AG04450 (cell line): ENCODE measurements at regions of chr20 and their contacts with region 1.

Region 1: DNA sequence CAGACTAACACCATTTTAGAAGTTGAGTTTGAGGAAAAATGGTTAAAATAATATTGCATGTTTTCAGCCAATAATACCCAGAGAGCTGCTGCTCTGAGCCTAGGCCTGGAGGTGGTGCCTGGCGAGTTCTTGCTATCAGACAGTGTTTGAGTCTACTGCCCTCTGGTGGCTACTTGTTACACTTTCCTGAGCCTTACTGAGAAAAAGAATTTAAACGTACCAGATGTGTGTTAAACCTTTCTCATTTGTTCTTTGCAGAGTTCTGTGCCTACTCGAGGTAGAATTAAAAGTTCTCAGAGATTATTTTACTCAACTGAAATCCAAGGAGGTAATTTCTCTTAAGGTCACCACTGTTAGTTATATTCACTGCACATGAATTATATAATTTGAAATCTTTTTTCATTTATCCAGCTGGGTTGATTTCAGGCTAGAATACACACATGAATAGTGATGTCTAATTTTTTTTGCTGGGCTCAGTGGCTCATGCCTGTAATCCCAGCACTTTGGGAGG is 38.2 kb downstream of the SHLD1 start:
- DNase-seq: peak; percentile 77
- H3K4me3 ChIP-seq: no peak overlapping the region
- H3K27ac ChIP-seq: no peak overlapping the region
- H3K27me3 ChIP-seq: no peaks in the 10 kb centered on the region
- CTCF ChIP-seq: peak; percentile 91

Region 2: DNA sequence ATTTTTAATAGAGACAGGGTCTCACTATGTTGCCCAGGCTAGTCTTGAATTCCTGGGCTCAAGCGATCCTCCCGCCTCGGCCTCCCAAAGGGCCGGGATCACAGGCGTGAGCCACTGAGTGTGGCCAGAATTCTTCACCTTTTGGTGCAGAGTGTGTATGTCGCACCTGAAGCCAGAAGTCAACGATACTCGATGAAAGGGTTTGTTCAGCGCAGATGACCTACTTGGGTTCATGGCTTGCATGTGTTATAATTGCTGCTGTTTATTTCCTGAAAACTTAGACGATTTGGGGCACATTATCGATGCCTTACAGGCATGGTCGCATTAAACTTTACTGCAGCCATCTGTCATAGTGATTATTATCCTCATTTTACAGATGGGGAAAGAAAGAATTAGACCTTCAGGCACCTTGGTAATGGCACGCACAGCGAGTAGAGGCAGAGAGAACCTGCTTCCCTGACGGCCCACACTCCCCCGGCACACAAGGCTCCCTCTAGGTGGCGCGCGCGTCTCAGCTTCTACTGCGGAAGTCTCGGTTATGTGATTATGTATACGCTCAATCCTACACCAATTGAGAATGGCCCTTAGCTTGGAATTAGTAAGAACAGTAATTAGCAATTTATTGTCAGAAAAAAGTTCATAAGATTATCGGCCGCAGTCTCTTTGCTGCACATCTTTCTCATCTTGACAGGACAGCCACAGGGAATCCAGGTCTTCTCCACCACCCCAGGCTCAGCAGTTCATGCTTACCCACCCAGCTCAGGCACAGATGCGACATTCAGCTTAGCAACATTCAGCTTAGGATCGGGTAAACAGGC is 258.9 kb before region 1 on chr20:
- CTCF ChIA-PET with region 1: interaction called, 95 read pairs
- POLR2A ChIA-PET with region 1: no interaction called
- DNase-seq: peak; percentile 16
- H3K4me3 ChIP-seq: no peak overlapping the region
- H3K27ac ChIP-seq: no peak overlapping the region
- H3K27me3 ChIP-seq: peaks cover 3% of the 10 kb centered on the region
- CTCF ChIP-seq: peak; percentile 90

Region 3: GRCh38 chr20:5557123-5557522 is 231.3 kb before region 1 on chr20:
- CTCF ChIA-PET with region 1: interaction called, 105 read pairs
- POLR2A ChIA-PET with region 1: interaction called, 3 read pairs
- DNase-seq: no peak
- H3K4me3 ChIP-seq: no peak overlapping the region
- H3K27ac ChIP-seq: no peak overlapping the region
- H3K27me3 ChIP-seq: no peaks in the 10 kb centered on the region
- CTCF ChIP-seq: peak; percentile 75

Region 4: GRCh38 chr20:5569021-5569420 is 219.4 kb before region 1 on chr20:
- CTCF ChIA-PET with region 1: interaction called, 49 read pairs
- POLR2A ChIA-PET with region 1: no interaction called
- DNase-seq: no peak
- H3K4me3 ChIP-seq: no peak overlapping the region
- H3K27ac ChIP-seq: no peak overlapping the region
- H3K27me3 ChIP-seq: no peaks in the 10 kb centered on the region
- CTCF ChIP-seq: peak; percentile 57

Region 5: DNA sequence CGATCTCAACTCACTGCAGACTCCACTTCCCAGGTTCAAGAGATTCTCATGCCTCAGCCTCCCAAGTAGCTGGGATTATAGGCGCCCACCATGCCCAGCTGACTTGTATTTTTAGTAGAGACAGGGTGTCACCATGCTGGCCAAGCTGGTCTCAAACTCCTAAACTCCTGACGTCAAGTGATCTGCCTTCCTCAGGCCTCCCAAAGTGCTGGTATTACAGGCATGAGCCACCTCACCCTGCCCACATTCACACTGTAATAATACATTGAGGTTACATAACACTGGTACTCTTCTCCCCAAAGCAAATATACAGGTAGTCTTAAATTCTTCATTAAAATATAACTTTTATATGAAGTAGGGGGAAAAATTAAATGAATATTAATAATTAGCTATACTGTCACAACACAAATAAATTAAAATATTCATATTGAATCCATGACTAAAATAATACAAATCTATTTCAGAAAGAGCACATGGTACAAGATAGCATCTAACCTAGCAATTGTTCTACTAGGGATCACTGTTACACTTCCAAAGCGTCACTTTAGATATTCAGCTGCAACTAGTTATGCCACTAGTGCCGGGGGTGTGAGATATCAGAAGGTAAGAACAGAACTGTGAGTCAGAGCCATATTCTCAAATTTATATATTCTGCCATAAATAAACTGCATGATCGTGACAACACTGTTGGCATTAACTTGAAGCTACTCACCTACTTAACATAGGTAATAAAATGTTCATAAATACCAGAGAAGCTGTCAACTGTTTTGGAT is 207.3 kb before region 1 on chr20:
- CTCF ChIA-PET with region 1: interaction called, 12 read pairs
- POLR2A ChIA-PET with region 1: no interaction called
- DNase-seq: no peak
- H3K4me3 ChIP-seq: no peak overlapping the region
- H3K27ac ChIP-seq: no peak overlapping the region
- H3K27me3 ChIP-seq: no peaks in the 10 kb centered on the region
- CTCF ChIP-seq: no peak

Region 6: GRCh38 chr20:5606350-5606749 is 182.1 kb before region 1 on chr20:
- CTCF ChIA-PET with region 1: interaction called, 13 read pairs
- POLR2A ChIA-PET with region 1: no interaction called
- DNase-seq: no peak
- H3K4me3 ChIP-seq: no peak overlapping the region
- H3K27ac ChIP-seq: no peak overlapping the region
- H3K27me3 ChIP-seq: no peaks in the 10 kb centered on the region
- CTCF ChIP-seq: no peak

Region 7: GRCh38 chr20:5766085-5766764 is 22.2 kb before region 1 on chr20:
- CTCF ChIA-PET with region 1: interaction called, 13 read pairs
- POLR2A ChIA-PET with region 1: no interaction called
- DNase-seq: no peak
- H3K4me3 ChIP-seq: no peak overlapping the region
- H3K27ac ChIP-seq: no peak overlapping the region
- H3K27me3 ChIP-seq: no peaks in the 10 kb centered on the region
- CTCF ChIP-seq: no peak

Region 8: DNA sequence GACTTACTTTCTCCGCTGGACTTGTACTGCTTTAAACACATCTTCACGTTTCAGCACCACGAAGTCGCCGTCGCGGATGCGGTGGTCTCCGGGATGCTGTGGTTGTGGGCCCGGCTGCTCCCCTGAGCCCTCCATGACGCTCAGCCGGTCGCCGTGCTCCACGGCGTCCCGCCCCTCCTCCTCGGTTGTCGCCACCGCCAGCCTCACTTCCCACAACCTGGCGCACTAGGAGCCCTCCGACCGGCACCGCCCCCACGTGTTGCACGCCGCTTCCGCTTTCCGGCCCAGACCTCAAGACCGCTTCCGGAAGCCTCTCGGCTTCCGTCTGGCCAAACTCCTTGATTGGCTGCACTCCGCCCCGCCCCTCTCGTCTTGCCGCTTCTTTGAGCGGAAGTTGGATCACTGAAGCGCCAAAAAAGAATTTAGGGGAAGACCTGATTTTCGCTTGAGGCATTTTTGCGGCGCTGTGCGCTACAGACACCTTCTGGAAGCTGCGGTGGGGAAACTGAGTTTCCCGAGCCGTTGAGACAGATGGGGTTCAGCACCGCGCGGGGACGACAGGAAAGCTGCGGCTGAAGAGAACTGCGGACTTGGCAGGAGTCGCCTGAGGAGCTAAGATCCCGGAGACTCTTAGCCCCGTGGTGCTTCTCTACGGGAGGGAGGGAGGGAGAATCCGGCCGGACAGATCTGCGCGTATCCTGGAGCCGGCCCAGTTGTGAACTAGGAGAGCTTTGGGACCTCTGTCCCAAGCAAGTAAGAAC is 162.0 kb after region 1 on chr20 and contains the starts of genes MCM8 and TRMT6:
- CTCF ChIA-PET with region 1: no interaction called
- POLR2A ChIA-PET with region 1: no interaction called
- DNase-seq: peak; percentile 84
- H3K4me3 ChIP-seq: peak within 1 kb of the TSS; percentile 94
- H3K27ac ChIP-seq: peak within 1 kb of the TSS; percentile 61
- H3K27me3 ChIP-seq: no peaks in the 10 kb centered on the region
- CTCF ChIP-seq: no peak
- polyA plus RNA-seq, gene MCM8: 2.0 and 2.8 TPM in 2 replicates
- polyA plus RNA-seq, gene TRMT6: 8.3 and 10.2 TPM in 2 replicates

Region 9: DNA sequence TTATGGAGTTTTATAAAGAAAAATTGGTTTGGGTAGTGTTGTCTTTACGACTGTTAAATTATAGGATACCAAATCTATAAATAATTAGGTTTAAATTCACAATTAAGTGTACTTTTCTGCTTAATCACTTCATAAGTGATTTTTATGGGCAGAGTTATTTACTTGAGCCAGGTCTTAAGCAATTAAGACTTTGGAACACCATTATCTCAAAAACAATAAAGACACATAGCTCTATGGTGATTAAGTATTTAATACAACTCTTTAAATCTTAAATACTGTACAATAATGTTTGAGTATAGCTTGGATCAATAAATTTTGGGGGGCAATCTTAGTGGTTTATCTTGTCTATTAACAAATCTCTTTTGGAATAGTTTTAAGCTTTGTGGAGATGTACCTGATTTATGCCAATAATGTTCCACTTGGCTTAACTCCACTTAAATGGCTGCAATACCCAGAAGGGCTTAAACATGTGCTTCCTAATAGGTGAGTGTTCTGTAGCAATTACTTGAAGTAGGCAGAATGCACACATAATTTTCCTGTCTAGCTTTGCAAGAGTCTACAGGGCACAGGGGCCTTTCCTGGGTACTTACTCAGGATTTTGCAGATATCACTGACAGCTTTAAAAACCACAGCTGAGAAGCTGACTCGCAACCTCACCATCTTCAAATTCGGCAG is 326.9 kb after region 1 on chr20:
- CTCF ChIA-PET with region 1: no interaction called
- POLR2A ChIA-PET with region 1: no interaction called
- DNase-seq: no peak
- H3K4me3 ChIP-seq: no peak overlapping the region
- H3K27ac ChIP-seq: no peak overlapping the region
- H3K27me3 ChIP-seq: no peaks in the 10 kb centered on the region
- CTCF ChIP-seq: no peak